Activated naive CD4-positive, alpha-beta T cell treated with anti-CD3 and anti-CD28 coated beads for 36 hours (primary cell): ENCODE measurements at regions of chr2 and their contacts with region 1.

Region 1: DNA sequence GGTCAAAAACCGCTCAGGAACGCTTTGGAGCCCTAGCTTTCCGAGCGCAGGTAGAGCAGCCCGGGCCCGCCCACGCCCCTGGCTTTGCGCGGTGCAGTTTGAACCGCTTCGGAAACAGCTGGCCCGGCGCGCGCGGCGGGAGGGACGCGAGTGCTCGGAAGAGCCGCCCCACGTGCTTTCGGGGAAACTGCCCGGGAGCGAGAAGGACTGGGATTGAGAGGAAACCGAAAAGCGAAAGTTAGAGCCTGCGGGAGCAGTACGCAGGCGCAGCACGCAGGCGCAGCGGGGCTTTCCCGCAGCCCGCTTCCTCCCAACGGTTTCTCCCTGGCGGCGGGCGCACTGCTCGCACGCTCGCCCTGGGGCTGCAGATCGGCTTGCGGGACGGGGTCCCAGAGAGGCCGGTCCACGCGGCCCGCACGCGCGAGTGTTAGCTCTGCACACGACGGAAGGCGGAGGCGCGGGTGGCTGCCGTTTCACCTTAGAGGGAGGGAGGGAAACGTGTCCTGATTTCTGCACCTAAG is 6.3 kb upstream of the STAT1 start:
- DNase-seq: peak; percentile 93
- H3K4me3 Mint-ChIP-seq: no peak overlapping the region
- H3K27ac Mint-ChIP-seq: no peak overlapping the region
- H3K4me1 Mint-ChIP-seq: peaks cover 36% of the 10 kb centered on the region
- H3K27me3 Mint-ChIP-seq: no peaks in the 10 kb centered on the region

Region 2: DNA sequence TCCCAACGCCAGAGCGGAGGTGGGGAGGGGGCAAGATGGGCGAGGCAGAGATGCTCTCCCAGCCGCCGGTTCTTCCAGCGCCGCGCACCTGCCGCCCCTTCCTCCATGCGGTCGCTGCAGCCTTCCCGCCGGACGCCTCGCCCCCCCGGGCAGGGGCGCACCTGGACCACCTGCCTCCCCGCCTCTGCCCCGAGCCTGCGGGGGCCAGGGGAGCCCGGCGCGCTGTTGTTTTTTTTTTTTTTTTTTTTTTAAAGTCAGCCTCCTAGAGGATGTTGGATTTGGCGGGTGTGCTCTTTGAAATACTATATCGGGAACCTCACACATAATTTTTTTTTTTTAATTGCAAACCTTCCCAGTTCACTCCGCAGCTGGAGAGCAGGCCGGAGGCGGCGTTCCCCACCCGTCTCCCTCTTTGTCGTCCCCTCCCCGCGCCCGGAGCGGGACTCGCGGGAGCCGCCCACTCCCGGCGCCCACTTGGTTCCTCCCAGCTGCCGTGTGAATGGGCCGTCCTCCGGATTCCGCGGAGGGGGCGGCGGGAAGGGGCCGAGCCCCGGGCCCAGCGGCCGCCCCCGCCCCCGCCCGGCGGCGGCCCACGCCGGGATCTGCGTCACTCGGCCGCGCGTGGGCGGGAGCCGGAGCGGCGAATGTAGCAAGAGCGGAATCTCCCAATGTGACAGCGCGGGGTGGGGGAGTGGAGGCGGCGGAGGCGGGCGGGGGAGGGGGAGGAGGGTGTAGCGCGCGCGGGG is 371.8 kb before region 1 on chr2:
- CTCF ChIA-PET with region 1: no interaction called
- intact Hi-C with region 1: loop called (anchors 5 kb)
- DNase-seq: peak; percentile 81
- H3K4me3 Mint-ChIP-seq: peak overlapping the region; percentile 68
- H3K27ac Mint-ChIP-seq: peak overlapping the region; percentile 76
- H3K4me1 Mint-ChIP-seq: peaks cover 43% of the 10 kb centered on the region
- H3K27me3 Mint-ChIP-seq: no peaks in the 10 kb centered on the region

Region 3: GRCh38 chr2:191030521-191031154 is 10.4 kb after region 1 on chr2:
- CTCF ChIA-PET with region 1: interaction called, 4 read pairs
- intact Hi-C with region 1: loop called (anchors 1 kb)
- DNase-seq: peak; percentile 59
- H3K4me3 Mint-ChIP-seq: no peak overlapping the region
- H3K27ac Mint-ChIP-seq: peak overlapping the region; percentile 44
- H3K4me1 Mint-ChIP-seq: peaks cover 48% of the 10 kb centered on the region
- H3K27me3 Mint-ChIP-seq: no peaks in the 10 kb centered on the region

Region 4: DNA sequence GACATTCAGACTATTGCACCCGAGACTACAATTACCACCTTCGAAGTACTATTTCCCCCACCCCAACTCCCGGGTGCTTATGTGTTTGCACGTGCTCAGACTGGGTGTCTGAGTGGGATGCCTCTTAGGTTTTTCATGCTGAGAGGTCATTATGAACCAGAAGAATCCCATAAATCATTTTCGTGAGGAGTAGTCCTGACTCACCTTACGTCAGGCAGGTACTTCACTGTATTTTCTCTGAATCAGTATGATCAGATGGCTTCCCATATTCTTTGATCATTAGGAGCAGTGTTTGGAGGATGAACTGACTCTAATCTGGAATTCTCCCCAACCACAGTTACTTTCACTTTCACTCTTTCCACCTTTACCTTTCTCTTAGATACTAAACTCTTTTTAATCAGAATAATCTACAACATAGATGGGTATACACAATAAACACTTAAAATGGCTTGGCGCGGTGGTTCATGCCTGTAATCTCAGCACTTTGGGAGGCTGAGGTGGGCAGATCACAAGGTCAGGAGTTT is 168.9 kb after region 1 on chr2:
- CTCF ChIA-PET with region 1: no interaction called
- intact Hi-C with region 1: loop called (anchors 1 kb)
- DNase-seq: no peak
- H3K4me3 Mint-ChIP-seq: no peak overlapping the region
- H3K27ac Mint-ChIP-seq: peak overlapping the region; percentile 68
- H3K4me1 Mint-ChIP-seq: peaks cover 73% of the 10 kb centered on the region
- H3K27me3 Mint-ChIP-seq: no peaks in the 10 kb centered on the region